ENCODE measurements at regions of chr13 and their contacts with region 1.

Region 1: GRCh38 chr13:38530492-38530891 is 156.4 kb upstream of the FREM2 start:
- DNase-seq: peak; percentile 57
- H3K4me3 ChIP-seq: no peak overlapping the region
- H3K27ac ChIP-seq: no peak overlapping the region
- H3K4me1 ChIP-seq: peaks cover 14% of the 10 kb centered on the region
- H3K27me3 ChIP-seq: no peaks in the 10 kb centered on the region
- CTCF ChIP-seq: peak; percentile 68

Region 2: DNA sequence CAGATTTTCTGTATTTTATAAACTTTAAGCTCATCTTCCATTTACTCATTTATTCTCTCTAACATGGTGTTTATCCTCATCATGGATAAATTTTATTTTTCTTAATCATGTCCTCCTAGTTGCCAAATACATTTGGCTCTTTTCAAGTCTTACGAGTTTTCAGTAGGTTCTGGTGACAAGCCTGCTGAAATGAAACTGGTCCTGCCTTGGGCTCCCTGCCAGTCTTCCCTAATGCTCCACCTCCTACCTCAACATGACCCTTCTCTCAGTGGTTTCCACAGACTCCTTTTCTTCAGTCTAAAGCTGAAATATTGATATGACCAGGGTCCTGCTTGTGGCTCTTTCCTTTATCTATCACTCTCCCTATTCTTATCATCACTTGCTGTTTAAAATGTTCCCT is 742.1 kb before region 1 on chr13:
- CTCF ChIA-PET with region 1: no interaction called
- POLR2A ChIA-PET with region 1: no interaction called
- intact Hi-C with region 1: loop called (anchors 10 kb)
- DNase-seq: no peak
- H3K4me3 ChIP-seq: no peak overlapping the region
- H3K27ac ChIP-seq: no peak overlapping the region
- H3K4me1 ChIP-seq: peaks cover 29% of the 10 kb centered on the region
- H3K27me3 ChIP-seq: no peaks in the 10 kb centered on the region
- CTCF ChIP-seq: no peak

Region 3: DNA sequence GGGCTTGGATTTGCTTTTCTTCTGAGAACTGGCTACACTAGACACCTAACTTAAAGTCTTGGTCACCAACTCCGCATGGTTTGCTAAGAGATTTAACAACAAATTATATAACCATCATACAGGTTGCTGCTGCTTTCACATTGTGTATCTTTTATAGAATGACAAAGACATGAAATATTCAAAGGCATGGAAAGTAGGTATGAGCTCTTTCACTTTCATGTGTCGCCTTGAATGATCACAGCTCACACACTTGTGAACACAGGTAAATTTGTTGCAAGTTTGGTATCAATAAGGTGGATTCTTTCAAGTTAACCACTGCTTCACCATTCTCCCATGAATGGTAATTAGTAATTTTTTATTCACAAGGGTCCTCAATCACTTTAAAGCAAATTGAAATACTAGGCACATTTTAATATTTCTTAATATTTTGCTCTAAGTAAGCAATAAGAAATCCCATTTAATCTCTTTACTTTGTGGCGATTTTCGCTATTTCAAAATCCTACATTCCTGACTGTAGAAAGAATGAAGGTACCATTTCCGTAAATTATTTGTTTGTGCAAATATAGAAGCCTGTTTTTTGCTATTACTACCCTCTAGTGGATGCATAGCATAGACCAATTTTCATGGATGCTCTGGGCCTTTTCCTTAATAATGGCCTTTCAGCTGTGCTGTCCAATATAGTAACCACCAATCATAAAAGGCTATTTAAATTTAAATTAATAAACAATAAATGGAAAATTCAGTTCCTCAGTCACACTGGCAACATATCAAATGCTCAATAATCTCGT is 110.9 kb after region 1 on chr13:
- CTCF ChIA-PET with region 1: no interaction called
- POLR2A ChIA-PET with region 1: no interaction called
- intact Hi-C with region 1: no loop called
- DNase-seq: peak; percentile 35
- H3K4me3 ChIP-seq: no peak overlapping the region
- H3K27ac ChIP-seq: no peak overlapping the region
- H3K4me1 ChIP-seq: no peaks in the 10 kb centered on the region
- H3K27me3 ChIP-seq: no peaks in the 10 kb centered on the region
- CTCF ChIP-seq: peak; percentile 69